ENCODE measurements at regions of chr6 and their contacts with region 1.

Region 1: DNA sequence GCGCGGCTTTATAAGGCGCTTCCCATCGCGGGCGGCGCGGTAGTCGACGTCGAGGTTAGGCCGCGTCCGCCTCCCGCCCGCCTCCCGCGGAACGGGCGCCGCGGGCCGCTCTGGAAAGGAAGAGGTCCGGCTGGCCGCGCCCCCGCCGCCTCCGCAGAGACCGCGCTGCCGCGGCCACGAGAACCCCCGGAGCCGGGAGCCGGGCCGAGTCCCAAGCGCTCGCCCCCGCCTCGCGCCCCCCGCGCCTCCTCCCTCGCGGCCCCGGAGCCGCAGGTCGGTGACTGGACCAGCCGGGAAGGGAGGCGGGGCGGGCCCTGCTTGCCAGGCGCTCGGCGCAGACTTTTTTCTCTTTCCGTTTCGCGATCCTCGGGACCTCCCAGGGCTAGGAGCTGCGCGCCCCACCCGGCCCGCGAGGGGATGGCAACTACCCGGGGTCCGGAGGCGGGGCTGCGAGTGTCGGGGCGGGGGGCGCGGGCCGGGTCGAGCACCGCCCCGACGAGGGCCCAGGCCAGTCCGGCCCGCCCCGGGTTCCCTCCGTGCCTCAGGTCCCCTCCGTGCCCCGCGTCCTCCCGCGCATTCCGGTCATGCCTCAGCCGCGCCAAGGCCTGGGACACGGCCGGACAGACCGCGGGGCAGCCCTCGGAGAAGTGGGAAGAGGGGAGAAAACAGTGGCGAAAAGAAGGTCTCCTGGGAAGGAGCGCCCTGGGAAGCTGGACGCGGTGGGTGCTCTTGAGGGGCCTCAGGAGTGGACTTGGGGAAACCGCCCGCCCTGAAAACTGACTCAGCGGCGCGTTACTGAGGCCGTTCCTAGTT is 423 bp upstream of the PXDC1 start:
- DNase-seq: peak; percentile 98
- H3K4me3 ChIP-seq: peak overlapping the region; percentile 59 to 97 (median 88)
- H3K27ac ChIP-seq: peak overlapping the region; percentile 87 to 99 (median 99)
- H3K4me1 ChIP-seq: peaks cover 35 to 55% (median 39%) of the 10 kb centered on the region in 4 donors
- H3K27me3 ChIP-seq: peaks cover 0 to 4% (median 0%) of the 10 kb centered on the region in 4 donors
- CTCF ChIP-seq: peak; percentile 12 to 58 (median 14)
- EP300 ChIP-seq: no peak
- POLR2A ChIP-seq: peak; percentile 67

Region 2: DNA sequence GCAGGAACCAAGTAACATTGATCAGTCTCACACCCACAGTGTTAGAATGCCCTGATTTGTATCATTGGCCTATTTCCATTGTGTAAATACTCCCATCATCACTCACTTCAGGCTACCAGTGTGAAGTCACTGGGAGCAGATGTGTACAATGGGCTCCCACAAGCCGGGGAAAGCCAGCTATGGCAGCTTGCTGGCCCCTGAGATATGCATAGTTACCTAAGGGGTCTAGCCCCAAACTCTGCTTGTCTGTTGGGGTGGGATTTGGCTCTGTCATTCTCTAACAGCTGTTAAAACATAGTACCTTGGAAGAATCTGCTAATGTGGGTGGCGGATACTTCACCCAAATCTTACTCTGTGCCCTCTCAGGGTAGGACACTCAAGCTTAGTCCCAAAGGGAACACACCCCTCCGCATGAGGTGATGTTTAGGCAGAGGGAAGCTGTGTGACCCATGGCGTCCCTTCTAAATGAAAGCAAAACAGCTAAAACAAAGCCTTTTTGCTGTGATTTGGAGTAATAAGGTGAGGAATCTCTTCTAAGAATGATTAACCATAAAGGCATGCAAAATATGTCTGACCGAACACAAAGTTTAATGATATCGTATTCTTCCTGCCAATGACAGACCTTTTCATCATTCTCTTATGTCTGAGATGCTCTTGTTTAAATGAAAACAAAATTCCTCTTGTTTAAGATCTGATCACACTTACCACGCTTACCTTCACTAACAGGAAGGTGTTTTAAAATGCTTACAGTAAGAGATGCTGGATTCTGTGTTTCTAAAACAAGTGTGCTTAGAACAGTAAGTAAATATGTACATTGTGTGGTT is 45.5 kb after region 1 on chr6:
- intact Hi-C with region 1: loop called (anchors 5 kb)
- DNase-seq: no peak
- H3K4me3 ChIP-seq: no peak overlapping the region
- H3K27ac ChIP-seq: peak overlapping the region in 1 of 4 donors; percentile 13
- H3K4me1 ChIP-seq: peaks cover 29 to 43% (median 39%) of the 10 kb centered on the region in 4 donors
- H3K27me3 ChIP-seq: no peaks in the 10 kb centered on the region
- CTCF ChIP-seq: no peak
- EP300 ChIP-seq: no peak
- POLR2A ChIP-seq: no peak

Region 3: DNA sequence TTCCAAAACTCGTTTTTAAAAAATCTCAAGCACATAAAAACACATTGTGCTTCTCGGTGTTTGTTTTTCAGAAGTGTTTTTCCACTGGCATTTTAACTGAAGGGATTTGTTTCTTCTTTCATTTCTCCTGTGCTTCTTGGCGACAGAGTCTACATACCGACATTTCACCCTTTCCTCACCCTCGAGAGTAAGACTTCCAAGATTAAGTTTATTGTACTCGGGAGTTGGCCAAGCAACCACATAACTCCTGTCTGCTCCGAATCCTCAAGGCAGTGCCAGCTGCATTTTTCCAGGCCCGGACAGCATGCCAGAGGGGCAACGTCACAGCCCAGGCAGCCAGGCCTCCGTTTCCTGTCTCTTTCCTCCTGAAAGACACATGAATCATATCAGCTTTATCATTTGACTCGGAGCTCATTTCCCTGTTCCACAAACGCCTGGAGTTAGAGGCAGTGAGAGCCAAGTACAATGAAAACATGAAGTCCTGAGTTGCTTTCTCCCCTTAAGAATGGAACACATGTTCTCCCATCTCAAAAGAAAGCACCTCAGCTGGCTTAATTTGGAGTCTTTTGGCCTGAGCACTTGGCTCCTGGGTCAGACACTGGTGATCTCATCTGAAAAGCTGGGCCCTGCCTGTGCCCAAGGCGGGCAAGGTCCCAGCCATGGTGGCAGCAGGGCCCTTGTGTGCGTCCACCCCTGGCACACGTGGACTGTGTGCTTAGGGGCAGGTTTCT is 74.1 kb after region 1 on chr6:
- intact Hi-C with region 1: loop called (anchors 5 kb)
- DNase-seq: peak; percentile 97
- H3K4me3 ChIP-seq: peak overlapping the region; percentile 34 to 47 (median 38)
- H3K27ac ChIP-seq: peak overlapping the region; percentile 92 to 95 (median 94)
- H3K4me1 ChIP-seq: peaks cover 35 to 41% (median 38%) of the 10 kb centered on the region in 4 donors
- H3K27me3 ChIP-seq: no peaks in the 10 kb centered on the region
- CTCF ChIP-seq: no peak
- EP300 ChIP-seq: no peak
- POLR2A ChIP-seq: no peak